PC-9 (cell line): ENCODE measurements at regions of chr17 and their contacts with region 1.

Region 1: DNA sequence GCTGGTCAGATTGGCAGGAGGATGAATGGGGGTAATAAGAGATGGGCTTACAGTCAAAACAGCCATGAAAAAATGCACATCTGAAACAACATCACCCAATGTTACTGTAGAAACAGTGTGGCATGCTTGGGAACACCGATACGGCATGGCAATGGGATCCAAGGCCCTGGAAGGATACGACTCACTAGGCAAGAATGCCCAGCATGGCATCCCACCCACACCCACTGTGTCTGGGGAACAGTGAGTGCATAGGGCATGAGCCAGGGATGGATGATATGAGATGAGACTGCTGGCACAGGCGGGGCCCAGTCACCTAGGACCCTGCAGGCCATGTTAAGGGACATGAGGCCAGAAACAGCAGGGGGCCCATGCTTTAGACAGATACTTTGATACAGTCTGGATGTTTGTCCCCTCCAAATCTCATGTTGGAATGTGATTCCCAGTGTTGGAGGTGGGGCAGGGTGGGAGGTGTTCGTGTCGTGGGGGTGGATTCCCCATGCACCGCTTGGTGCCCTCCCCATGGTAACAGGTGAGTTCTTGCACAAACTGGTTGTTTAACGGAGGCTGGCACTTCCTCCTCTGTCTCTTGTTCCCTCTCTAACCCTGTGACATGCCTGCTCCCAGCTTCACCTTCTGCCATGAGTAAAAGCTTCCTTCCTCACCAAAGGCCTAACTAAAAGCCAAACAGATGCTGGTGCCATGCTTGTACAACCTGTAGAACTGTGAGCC is 11.3 kb downstream of the TRIM25 start:
- DNase-seq: peak in 1 of 2 experiments; percentile 73
- H3K4me3 ChIP-seq: no peak overlapping the region
- H3K27ac ChIP-seq: no peak overlapping the region
- H3K4me1 ChIP-seq: 0 out of 2 replicates have a peak, but pooled peaks cover 6% of the 10 kb centered on the region
- H3K27me3 ChIP-seq: no peaks in the 10 kb centered on the region
- CTCF ChIP-seq: no peak

Region 2: DNA sequence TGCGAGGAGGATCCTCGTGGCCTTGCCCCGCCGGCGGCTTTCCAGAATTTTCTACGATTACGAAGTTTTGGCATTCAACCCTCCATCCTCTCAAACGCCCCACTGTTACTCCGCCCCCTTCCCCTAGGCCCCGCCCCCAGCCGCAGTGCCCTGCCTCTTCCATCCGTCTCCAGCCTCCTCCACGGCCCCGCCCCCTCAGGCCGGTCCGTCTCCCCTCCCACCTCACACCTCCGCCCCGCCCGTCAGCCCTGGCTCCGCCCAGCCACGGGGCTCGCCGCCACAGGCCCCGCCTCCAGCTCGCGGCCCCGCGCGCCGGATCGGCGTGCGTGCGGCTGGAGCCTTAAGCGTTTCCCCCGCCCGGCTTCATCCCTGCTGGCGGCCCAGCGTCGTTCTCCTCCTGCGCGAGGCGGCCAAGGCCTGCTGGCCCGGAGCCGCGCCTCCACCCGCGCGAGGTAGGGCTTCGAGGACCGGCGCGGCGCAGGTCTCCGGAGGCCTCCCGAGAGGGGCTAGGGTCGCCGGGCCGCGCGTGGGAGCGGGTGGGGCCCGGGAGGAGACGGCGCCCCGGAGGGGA is 68.6 kb before region 1 on chr17 and contains the starts of genes C17orf67 and DGKE:
- CTCF ChIA-PET with region 1: no interaction called
- POLR2A ChIA-PET with region 1: no interaction called
- intact Hi-C with region 1: loop called (anchors 5 kb)
- DNase-seq: peak; percentile 82 to 97
- H3K4me3 ChIP-seq: peak within 1 kb of the TSS; percentile 94
- H3K27ac ChIP-seq: peak within 1 kb of the TSS; percentile 24
- H3K4me1 ChIP-seq: peaks cover 32% of the 10 kb centered on the region
- H3K27me3 ChIP-seq: no peaks in the 10 kb centered on the region
- CTCF ChIP-seq: no peak
- total RNA-seq, gene C17orf67: 4.3 and 6.4 TPM in 2 replicates
- total RNA-seq, gene DGKE: 11.0 and 16.2 TPM in 2 replicates

Region 3: GRCh38 chr17:56887550-56888467 is 14.7 kb before region 1 on chr17:
- CTCF ChIA-PET with region 1: no interaction called
- POLR2A ChIA-PET with region 1: no interaction called
- intact Hi-C with region 1: no loop called
- DNase-seq: peak in 1 of 2 experiments; percentile 54
- H3K4me3 ChIP-seq: no peak overlapping the region
- H3K27ac ChIP-seq: no peak overlapping the region
- H3K4me1 ChIP-seq: no peaks in the 10 kb centered on the region
- H3K27me3 ChIP-seq: no peaks in the 10 kb centered on the region
- CTCF ChIP-seq: no peak

Region 4: GRCh38 chr17:56913864-56914640 is 11.5 kb after region 1 on chr17 and contains the start of gene TRIM25:
- CTCF ChIA-PET with region 1: no interaction called
- POLR2A ChIA-PET with region 1: interaction called, 19 read pairs
- intact Hi-C with region 1: no loop called
- DNase-seq: peak; percentile 75 to 85
- H3K4me3 ChIP-seq: peak within 1 kb of the TSS; percentile 83
- H3K27ac ChIP-seq: peak within 1 kb of the TSS; percentile 99
- H3K4me1 ChIP-seq: peaks cover 54% of the 10 kb centered on the region
- H3K27me3 ChIP-seq: no peaks in the 10 kb centered on the region
- CTCF ChIP-seq: no peak
- total RNA-seq, gene TRIM25: 63.8 and 92.8 TPM in 2 replicates

Region 5: DNA sequence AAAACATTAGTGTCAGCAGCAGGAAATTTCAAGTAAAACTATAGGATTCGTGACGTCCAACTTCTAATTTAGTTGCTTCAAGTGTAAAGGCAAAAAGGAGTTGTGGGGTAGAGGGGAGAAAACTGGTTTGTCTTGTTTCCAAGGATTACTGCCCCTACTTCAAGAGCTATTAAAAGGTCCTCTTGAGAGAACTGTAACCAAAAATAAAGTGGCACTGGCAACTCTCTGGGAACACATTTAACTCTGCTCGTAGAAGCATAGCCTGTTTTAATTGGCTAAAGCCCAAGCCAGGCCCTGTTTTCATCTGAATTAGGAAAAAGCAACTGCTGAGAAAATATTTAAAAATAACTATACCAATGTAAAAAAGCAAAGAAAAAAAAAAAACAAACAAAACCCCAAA is 130.8 kb after region 1 on chr17:
- CTCF ChIA-PET with region 1: no interaction called
- POLR2A ChIA-PET with region 1: no interaction called
- intact Hi-C with region 1: no loop called
- DNase-seq: peak in 1 of 2 experiments; percentile 82
- H3K4me3 ChIP-seq: peak overlapping the region; percentile 35; the same call in 1 of the 2 replicates
- H3K27ac ChIP-seq: peak overlapping the region; percentile 62
- H3K4me1 ChIP-seq: peaks cover 56% of the 10 kb centered on the region
- H3K27me3 ChIP-seq: no peaks in the 10 kb centered on the region
- CTCF ChIP-seq: no peak

Region 6: GRCh38 chr17:58020401-58020800 is 1117.9 kb after region 1 on chr17:
- CTCF ChIA-PET with region 1: interaction called, 10 read pairs
- POLR2A ChIA-PET with region 1: no interaction called
- intact Hi-C with region 1: no loop called
- DNase-seq: no peak
- H3K4me3 ChIP-seq: no peak overlapping the region
- H3K27ac ChIP-seq: no peak overlapping the region
- H3K4me1 ChIP-seq: peaks cover 30% of the 10 kb centered on the region
- H3K27me3 ChIP-seq: no peaks in the 10 kb centered on the region
- CTCF ChIP-seq: no peak